Activated naive CD4-positive, alpha-beta T cell treated with anti-CD3 and anti-CD28 coated beads for 36 hours (primary cell): ENCODE measurements at regions of chr3 and their contacts with region 1.

Region 1: GRCh38 chr3:71577011-71577410 is 6.5 kb downstream of the FOXP1 start:
- DNase-seq: no peak
- H3K4me3 Mint-ChIP-seq: no peak overlapping the region
- H3K27ac Mint-ChIP-seq: no peak overlapping the region
- H3K4me1 Mint-ChIP-seq: peaks cover 31% of the 10 kb centered on the region
- H3K27me3 Mint-ChIP-seq: no peaks in the 10 kb centered on the region

Region 2: GRCh38 chr3:71504250-71505036 is 72.6 kb before region 1 on chr3:
- CTCF ChIA-PET with region 1: no interaction called
- intact Hi-C with region 1: no loop called
- DNase-seq: peak; percentile 62
- H3K4me3 Mint-ChIP-seq: no peak overlapping the region
- H3K27ac Mint-ChIP-seq: no peak overlapping the region
- H3K4me1 Mint-ChIP-seq: peaks cover 37% of the 10 kb centered on the region
- H3K27me3 Mint-ChIP-seq: no peaks in the 10 kb centered on the region

Region 3: DNA sequence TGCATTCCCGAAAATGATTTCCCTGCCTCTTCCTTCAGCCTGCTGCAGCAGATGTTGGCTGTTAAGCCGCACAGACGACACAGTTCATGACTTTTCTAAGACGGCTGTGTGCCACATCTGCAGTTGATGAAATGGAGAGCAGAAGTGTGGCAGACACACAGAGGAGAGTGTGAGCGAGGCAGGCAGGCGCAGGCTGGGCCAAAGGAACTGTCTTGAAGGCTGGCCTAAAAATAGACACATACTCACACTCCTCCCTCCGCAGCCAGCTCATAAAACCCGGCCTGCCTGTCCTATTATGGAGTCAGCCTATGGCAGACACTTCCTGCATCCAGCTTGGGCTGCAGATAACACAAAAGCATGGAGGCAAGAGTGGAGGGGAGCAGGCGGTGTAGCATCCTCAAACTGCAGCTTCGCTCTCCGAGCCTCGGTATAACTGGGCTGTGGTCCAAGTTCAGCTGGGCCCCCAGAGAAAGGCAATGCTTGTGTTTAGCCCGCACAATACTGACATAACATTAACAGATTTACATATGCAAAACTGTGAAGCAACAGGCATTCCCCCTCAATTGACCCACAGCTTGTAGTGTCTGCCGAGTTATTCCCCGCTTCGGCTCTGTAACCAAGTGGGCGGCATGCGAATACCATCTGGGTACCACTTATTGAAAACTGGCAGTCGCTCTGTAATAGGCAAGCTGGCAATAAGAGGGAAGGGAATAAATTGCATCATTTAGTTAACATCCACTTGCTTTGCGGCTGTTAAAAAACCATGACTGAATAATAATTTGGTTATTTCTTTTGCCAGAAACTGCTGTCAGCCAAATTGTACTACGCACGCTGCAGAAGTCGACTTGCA is 34.3 kb before region 1 on chr3:
- CTCF ChIA-PET with region 1: interaction called, 6 read pairs
- intact Hi-C with region 1: loop called (anchors 2 kb)
- DNase-seq: peak; percentile 42
- H3K4me3 Mint-ChIP-seq: no peak overlapping the region
- H3K27ac Mint-ChIP-seq: no peak overlapping the region
- H3K4me1 Mint-ChIP-seq: peaks cover 19% of the 10 kb centered on the region
- H3K27me3 Mint-ChIP-seq: peaks cover 3% of the 10 kb centered on the region

Region 4: GRCh38 chr3:71734883-71735282 is 157.9 kb after region 1 on chr3:
- CTCF ChIA-PET with region 1: no interaction called
- intact Hi-C with region 1: no loop called
- DNase-seq: no peak
- H3K4me3 Mint-ChIP-seq: no peak overlapping the region
- H3K27ac Mint-ChIP-seq: no peak overlapping the region
- H3K4me1 Mint-ChIP-seq: peaks cover 3% of the 10 kb centered on the region
- H3K27me3 Mint-ChIP-seq: peaks cover 8% of the 10 kb centered on the region